ENCODE measurements at regions of chr5 and their contacts with region 1.

Region 1: DNA sequence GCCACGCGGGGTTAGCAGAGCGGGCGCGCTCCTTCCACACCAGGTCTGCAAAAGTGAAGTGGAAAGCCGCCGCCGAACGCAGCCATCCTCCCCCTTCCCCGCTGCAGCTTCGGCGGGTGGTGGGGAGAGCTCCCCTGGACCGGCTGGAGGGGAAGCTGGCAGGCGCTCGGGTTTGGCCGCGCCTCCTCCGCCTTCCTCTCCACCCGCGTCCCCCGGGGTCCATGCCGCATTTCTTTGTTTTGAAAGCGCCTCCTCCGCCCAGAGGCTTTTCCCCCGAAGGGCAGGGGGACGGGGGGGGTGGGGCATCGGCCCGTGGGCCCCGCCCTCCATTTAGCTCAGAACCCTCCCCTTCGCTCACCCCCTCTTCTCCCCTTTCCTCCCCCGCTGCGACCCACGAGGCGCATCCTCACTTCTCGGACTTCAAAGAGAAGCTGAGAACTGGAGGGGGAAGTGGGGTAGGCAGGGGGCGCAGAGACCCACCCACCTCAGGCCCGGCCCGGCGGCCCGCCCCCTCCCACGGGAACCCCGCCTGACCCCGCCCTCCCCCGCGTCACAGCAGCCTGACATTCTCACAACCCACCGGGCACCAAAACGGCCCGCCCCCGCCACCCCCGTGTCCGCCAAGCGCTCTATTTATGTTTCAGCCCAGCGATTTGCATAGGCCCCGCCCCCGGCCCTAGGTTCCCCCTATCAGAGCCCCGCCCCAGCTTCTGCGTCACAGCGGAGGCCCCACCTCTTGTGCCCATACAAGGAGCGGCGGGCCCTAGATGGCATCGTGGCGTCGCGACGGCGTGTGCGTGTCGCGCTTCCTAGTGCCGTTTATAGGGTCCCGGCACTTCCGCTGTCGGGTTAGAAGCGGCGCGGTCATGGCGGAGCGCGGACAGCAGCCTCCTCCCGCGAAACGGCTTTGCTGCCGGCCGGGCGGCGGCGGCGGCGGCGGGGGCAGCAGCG is at the start of gene ZSWIM6:
- DNase-seq: peak; percentile 100
- H3K4me3 ChIP-seq: peak within 1 kb of the TSS; percentile 94
- H3K27ac ChIP-seq: peak within 1 kb of the TSS; percentile 82
- H3K4me1 ChIP-seq: peaks cover 39% of the 10 kb centered on the region
- H3K27me3 ChIP-seq: no peaks in the 10 kb centered on the region
- total RNA-seq, gene ZSWIM6: 3.9 and 4.8 TPM in 2 replicates

Region 2: DNA sequence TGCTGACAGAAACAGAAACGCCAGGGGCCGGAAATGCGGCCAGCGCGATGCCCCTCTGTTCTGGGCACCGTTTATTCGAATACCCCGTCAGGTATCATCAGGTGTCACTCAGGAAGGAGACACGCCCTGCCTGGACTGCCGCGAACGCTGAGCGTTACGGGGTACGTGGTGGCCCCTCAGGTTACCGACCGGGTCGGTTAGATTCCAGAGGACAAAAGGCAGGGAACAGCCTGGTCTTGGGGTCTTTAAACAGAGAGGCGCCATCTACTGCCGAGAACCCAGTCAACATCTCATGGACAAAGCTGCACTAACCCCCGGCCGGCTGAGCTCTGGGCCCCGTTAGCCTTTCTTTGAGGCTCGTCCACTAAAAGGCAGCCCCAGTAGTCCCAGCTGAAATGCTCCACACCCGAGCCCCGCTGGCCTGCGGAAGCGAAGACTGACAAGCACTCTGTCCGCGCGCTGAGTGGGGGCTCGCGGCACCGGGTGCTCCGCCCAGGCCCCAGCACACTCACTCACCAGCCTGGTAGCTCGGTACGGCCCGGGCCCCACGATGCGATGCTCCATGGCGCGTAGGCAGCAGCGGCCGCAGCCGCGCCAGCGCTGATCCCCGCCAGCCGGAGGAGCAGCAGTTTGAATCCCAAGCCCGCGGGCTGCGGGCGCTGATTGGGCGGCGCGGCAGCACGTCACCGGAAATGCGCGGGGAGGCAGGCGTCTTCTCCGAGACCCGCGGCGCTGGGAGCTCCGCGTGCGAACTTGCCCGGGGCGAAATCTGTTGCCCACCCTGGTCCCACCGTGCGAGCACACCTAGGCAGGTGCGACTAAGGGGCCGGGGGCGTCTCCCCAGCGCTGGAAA is 631.9 kb before region 1 on chr5 and contains the start of gene DEPDC1B:
- in situ Hi-C with region 1: loop called (anchors 25 kb)
- DNase-seq: peak; percentile 96
- H3K4me3 ChIP-seq: peak within 1 kb of the TSS; percentile 96
- H3K27ac ChIP-seq: peak within 1 kb of the TSS; percentile 64
- H3K4me1 ChIP-seq: no peaks in the 10 kb centered on the region
- H3K27me3 ChIP-seq: no peaks in the 10 kb centered on the region
- total RNA-seq, gene DEPDC1B: 2.5 and 8.5 TPM in 2 replicates

Region 3: DNA sequence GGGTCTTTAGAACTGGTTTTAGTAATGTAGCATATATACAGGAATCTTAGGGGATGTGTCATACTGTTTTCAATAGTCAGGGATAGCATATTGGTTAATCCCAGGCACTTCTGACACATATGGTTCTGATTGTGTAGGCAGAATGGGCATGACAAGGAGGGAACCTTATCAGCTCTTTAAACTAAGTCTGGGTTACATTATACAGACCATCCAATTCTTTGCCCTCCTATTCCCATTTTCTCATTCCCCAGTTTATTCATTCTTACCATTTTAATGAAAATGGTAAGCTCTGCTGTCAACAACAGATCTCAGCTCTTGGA is 301.6 kb before region 1 on chr5:
- in situ Hi-C with region 1: no loop called
- DNase-seq: peak; percentile 63
- H3K4me3 ChIP-seq: no peak overlapping the region
- H3K27ac ChIP-seq: 0 out of 2 replicates have a peak overlapping the region, but pooled peaks have one; percentile 24
- H3K4me1 ChIP-seq: peaks cover 13% of the 10 kb centered on the region
- H3K27me3 ChIP-seq: no peaks in the 10 kb centered on the region